Activated CD8-positive, alpha-beta T cell treated with anti-CD3 and anti-CD28 coated beads for 36 hours (primary cell): ENCODE measurements at regions of chr16 and their contacts with region 1.

Region 1: DNA sequence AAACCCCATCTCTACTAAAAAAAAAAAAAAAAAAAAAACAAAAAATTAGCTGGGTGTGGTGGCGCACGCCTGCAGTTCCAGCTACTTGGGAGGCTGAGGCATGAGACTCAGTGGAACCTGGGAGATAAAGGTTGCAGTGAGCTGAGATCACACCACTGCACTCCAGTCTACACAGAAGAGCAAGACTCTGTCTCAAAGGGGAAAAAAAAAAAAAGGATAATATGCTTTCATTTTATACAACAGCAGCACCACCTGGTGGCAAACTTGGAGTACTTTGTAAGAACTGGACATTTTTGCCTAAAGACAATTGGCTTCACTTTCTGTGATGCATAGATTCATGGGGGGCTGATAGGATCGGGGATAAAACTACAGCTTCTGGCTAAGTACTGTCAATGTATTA is 8.5 kb downstream of the CHTF8 start:
- DNase-seq: peak; percentile 75
- ATAC-seq: peak; percentile 83
- H3K4me3 Mint-ChIP-seq: no peak overlapping the region
- H3K27ac Mint-ChIP-seq: no peak overlapping the region
- H3K4me1 Mint-ChIP-seq: peaks cover 21% of the 10 kb centered on the region
- H3K27me3 Mint-ChIP-seq: no peaks in the 10 kb centered on the region
- CTCF ChIP-seq: peak; percentile 73

Region 2: GRCh38 chr16:68848786-68849185 is 275.1 kb before region 1 on chr16:
- CTCF ChIA-PET with region 1: interaction called, 27 read pairs
- POLR2A ChIA-PET with region 1: no interaction called
- intact Hi-C with region 1: no loop called
- DNase-seq: no peak
- ATAC-seq: no peak
- H3K4me3 Mint-ChIP-seq: no peak overlapping the region
- H3K27ac Mint-ChIP-seq: no peak overlapping the region
- H3K4me1 Mint-ChIP-seq: peaks cover 24% of the 10 kb centered on the region
- H3K27me3 Mint-ChIP-seq: no peaks in the 10 kb centered on the region
- CTCF ChIP-seq: no peak

Region 3: GRCh38 chr16:69112285-69113129 is 11.4 kb before region 1 on chr16:
- CTCF ChIA-PET with region 1: interaction called, 73 read pairs
- POLR2A ChIA-PET with region 1: interaction called, 3 read pairs
- intact Hi-C with region 1: no loop called
- DNase-seq: peak; percentile 74
- ATAC-seq: peak; percentile 91
- H3K4me3 Mint-ChIP-seq: no peak overlapping the region
- H3K27ac Mint-ChIP-seq: no peak overlapping the region
- H3K4me1 Mint-ChIP-seq: peaks cover under 1% of the 10 kb centered on the region
- H3K27me3 Mint-ChIP-seq: peaks cover 13% of the 10 kb centered on the region
- CTCF ChIP-seq: peak; percentile 79

Region 4: DNA sequence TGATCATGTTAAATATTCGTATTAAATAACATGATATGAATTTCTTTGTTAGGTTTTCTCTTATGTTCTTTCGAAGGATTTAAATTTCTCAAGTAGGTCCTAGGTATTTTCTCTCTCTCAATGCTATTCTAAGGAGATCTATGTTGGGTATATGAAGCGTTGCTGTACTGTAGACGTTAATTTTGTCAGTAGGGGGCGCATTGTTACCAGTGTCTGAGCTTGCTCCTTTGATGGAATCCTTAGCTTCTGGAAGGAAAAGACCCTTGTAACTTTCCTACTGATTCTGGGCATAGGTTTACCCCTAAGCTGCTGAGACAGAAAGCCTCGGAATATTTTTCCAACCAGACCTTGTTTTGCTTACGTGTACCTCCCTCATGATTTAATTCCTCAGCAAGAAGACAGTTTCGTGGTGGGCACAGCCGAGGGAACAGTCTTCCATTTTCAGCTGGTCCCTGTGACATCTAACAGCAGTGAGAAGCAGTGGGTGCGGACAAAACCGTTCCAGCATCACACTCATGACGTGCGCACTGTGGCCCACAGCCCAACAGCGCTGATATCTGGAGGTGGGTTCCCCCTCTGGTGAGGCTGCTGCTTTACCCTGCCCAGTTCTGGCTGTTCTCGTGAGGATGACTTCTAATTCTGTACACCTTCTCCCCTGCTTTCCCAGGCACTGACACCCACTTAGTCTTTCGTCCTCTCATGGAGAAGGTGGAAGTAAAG is 26.4 kb after region 1 on chr16:
- CTCF ChIA-PET with region 1: interaction called, 11 read pairs
- POLR2A ChIA-PET with region 1: interaction called, 3 read pairs
- intact Hi-C with region 1: no loop called
- DNase-seq: peak; percentile 66
- ATAC-seq: peak; percentile 79
- H3K4me3 Mint-ChIP-seq: no peak overlapping the region
- H3K27ac Mint-ChIP-seq: no peak overlapping the region
- H3K4me1 Mint-ChIP-seq: peaks cover under 1% of the 10 kb centered on the region
- H3K27me3 Mint-ChIP-seq: no peaks in the 10 kb centered on the region
- CTCF ChIP-seq: peak; percentile 80